Upper lobe of right lung (tissue), 1 donor: ENCODE measurements at regions of chr7 and their contacts with region 1.

Region 1: GRCh38 chr7:29748286-29749108 is 57.8 kb upstream of the WIPF3 start:
- DNase-seq: no peak
- ATAC-seq: peak; percentile 85
- H3K4me3 ChIP-seq: no peak overlapping the region
- H3K27ac ChIP-seq: no peak overlapping the region
- H3K4me1 ChIP-seq: no peaks in the 10 kb centered on the region
- H3K27me3 ChIP-seq: no peaks in the 10 kb centered on the region
- CTCF ChIP-seq: peak; percentile 58

Region 2: DNA sequence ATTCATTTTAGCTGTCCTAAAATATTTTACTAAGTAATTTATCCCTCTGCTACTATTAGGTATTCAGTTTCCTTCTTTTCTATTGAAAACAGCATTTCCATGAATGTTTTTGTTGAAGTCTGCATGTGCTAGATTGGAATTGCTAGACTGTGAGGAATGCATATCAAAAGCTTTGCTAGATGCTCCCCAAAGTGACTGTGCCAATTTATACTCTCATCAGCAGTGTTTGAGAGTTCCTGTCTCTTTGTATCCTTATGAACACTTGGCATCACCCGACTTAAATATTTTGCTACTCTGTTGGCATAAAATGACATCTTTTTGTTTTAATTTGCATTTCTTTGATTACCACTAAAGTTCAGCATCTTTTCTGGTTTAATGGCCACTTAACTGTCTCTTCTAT is 229.9 kb before region 1 on chr7:
- intact Hi-C with region 1: no loop called
- DNase-seq: no peak
- ATAC-seq: no peak
- H3K4me3 ChIP-seq: no peak overlapping the region
- H3K27ac ChIP-seq: no peak overlapping the region
- H3K4me1 ChIP-seq: no peaks in the 10 kb centered on the region
- H3K27me3 ChIP-seq: no peaks in the 10 kb centered on the region
- CTCF ChIP-seq: no peak

Region 3: GRCh38 chr7:29921404-29922010 is 173.0 kb after region 1 on chr7:
- intact Hi-C with region 1: loop called (anchors 10 kb)
- DNase-seq: no peak
- ATAC-seq: peak; percentile 93
- H3K4me3 ChIP-seq: no peak overlapping the region
- H3K27ac ChIP-seq: no peak overlapping the region
- H3K4me1 ChIP-seq: no peaks in the 10 kb centered on the region
- H3K27me3 ChIP-seq: no peaks in the 10 kb centered on the region
- CTCF ChIP-seq: peak; percentile 87

Region 4: GRCh38 chr7:29946428-29947186 is 198.1 kb after region 1 on chr7:
- intact Hi-C with region 1: no loop called
- DNase-seq: no peak
- ATAC-seq: peak; percentile 83
- H3K4me3 ChIP-seq: no peak overlapping the region
- H3K27ac ChIP-seq: no peak overlapping the region
- H3K4me1 ChIP-seq: no peaks in the 10 kb centered on the region
- H3K27me3 ChIP-seq: no peaks in the 10 kb centered on the region
- CTCF ChIP-seq: peak; percentile 50